ENCODE measurements at regions of chr21 and their contacts with region 1.

Region 1: DNA sequence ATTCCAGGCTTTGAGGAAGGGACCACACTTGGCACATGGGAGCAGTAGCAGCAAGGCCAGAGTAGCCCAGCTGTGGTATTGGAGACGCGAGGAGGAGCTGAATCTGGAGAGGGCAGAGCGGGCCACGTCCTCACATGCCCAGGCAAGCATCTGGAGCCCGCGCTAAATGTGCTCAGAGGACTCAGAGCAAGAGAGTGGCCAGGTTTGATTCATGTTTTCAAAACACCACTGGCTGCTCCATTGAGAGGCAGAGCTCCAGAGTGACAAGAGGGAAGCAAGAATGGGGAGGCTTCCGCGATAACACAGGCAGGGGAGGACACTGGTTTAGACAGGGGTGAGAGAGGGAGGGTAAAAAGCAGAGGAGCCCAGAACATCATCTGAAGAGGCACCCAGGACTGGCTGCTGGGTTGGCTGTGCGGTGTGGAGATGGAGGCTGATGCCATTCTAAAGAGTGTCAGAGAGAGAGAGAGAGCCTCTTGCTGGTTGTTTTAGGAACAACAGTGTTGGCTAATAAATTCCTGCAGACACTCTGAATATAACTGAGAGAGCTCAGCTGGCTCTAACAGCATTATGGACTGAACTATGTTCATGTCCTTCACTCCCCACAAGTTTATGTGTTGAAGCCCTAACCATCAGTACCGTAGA is 32.3 kb downstream of the RCAN1 start:
- DNase-seq: no peak
- H3K4me3 ChIP-seq: no peak overlapping the region
- H3K27me3 ChIP-seq: no peaks in the 10 kb centered on the region
- CTCF ChIP-seq: peak; percentile 61

Region 2: GRCh38 chr21:34517491-34518245 is 65.0 kb before region 1 on chr21:
- CTCF ChIA-PET with region 1: interaction called, 24 read pairs
- POLR2A ChIA-PET with region 1: no interaction called
- DNase-seq: no peak
- H3K4me3 ChIP-seq: no peak overlapping the region
- H3K27me3 ChIP-seq: no peaks in the 10 kb centered on the region
- CTCF ChIP-seq: peak; percentile 31

Region 3: GRCh38 chr21:34548782-34549376 is 33.7 kb before region 1 on chr21:
- CTCF ChIA-PET with region 1: interaction called, 10 read pairs
- POLR2A ChIA-PET with region 1: interaction called, 3 read pairs
- DNase-seq: no peak
- H3K4me3 ChIP-seq: no peak overlapping the region
- H3K27me3 ChIP-seq: no peaks in the 10 kb centered on the region
- CTCF ChIP-seq: no peak

Region 4: DNA sequence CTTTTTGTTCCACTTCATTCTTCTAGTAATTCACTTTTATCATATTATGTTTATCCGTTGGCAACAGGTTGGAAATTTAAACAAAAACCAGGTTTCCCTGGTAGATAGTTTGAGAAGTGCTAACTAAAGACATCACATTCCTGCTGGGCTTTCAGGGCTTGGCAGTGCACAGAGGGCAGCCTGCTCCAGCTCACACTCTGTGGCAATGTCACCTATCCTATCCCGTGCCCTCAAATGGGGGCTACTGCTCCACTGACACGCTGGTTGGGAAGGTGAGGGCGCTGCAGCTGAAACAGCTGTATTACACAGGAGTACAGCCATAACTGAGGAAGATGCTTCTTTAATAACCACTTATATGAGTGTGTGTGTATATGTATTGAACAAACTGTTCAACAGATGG is 17.4 kb before region 1 on chr21:
- CTCF ChIA-PET with region 1: interaction called, 12 read pairs
- POLR2A ChIA-PET with region 1: no interaction called
- DNase-seq: no peak
- H3K4me3 ChIP-seq: no peak overlapping the region
- H3K27me3 ChIP-seq: no peaks in the 10 kb centered on the region
- CTCF ChIP-seq: no peak